ENCODE measurements at regions of chr18 and their contacts with region 1.

Region 1: DNA sequence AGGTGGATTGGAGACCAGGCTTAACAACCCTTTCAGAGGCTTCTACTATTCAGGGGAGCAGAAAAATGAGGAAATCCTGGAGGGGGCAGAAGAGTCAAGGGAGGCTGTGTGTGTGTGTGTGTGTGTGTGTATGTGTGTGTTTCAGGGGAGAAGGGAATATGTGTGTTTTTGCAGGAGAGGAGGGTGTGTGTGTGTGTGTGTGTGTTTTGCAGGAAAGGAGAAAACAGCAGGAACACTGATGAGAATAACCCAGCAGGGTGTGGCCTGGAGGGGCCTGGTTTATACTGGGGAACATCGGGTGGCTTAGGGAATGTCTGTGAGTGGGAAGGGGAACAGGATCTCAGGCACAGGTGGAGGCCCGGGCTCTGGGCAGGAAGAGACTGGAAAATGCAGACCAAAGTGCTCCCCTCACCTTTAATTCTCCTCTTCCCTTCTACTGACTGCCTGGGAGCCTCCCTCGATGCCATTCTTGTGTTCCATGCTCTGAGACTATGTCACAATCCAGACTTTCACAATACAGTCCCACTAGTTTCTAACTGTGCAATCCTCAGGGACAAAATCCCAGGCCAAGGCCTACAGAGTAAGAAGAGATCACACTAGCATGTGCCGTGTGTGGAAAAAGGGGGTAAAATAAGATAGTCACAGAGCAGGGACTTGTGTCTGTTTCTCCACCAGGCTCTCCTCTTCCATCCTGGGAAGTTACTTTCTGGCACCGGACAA is 10.0 kb downstream of the CYB5A start:
- DNase-seq: no peak
- H3K4me3 ChIP-seq: peak overlapping the region in 1 of 3 donors; percentile 28
- H3K27ac ChIP-seq: peak overlapping the region; percentile 53 to 85
- H3K4me1 ChIP-seq: peaks cover 0 to 68% (median 67%) of the 10 kb centered on the region in 3 donors
- H3K27me3 ChIP-seq: no peaks in the 10 kb centered on the region
- CTCF ChIP-seq: no peak

Region 2: GRCh38 chr18:74249181-74249968 is 32.4 kb before region 1 on chr18:
- intact Hi-C with region 1: loop called (anchors 5 kb)
- DNase-seq: no peak
- H3K4me3 ChIP-seq: no peak overlapping the region
- H3K27ac ChIP-seq: peak overlapping the region; percentile 43 to 66
- H3K4me1 ChIP-seq: peaks cover 0 to 27% (median 22%) of the 10 kb centered on the region in 3 donors
- H3K27me3 ChIP-seq: no peaks in the 10 kb centered on the region
- CTCF ChIP-seq: no peak

Region 3: DNA sequence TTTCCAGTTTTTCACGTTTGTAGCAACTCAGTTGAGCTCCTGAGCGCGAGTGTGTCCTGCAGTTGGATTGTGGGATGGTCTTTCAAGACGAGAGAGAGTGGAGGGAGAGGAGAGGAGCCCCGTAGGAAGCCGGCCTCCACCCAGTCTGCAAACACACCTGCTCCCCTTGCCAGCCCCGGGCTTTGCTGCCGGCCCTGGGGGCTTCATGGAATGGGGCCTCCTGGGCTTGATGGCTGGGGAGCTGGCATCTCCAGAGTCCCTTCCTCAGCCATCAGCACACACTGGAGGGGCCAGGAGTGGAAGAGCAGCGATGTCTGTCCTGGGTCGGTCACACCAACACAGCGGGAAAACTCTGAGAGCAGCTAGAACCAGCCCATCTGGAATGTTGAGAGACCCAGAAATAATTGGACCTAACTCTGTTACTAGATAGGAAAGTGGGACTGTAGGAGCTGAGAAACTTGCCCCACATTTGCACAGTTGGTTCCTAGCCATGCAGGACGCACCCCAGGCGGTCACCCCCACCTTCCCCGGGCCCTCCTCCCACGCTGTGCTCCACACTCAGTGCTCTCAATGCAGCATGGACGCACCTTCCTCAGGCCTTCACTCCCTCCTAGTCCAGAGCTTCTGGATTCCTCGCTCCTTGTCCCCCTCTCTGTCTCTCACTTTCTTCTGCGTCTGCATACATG is 857.6 kb after region 1 on chr18:
- intact Hi-C with region 1: no loop called
- DNase-seq: no peak
- H3K4me3 ChIP-seq: no peak overlapping the region
- H3K27ac ChIP-seq: no peak overlapping the region
- H3K4me1 ChIP-seq: no peaks in the 10 kb centered on the region
- H3K27me3 ChIP-seq: peaks cover 2% of the 10 kb centered on the region
- CTCF ChIP-seq: no peak